ENCODE measurements at regions of chr12 and their contacts with region 1.

Region 1: GRCh38 chr12:31647086-31647491 is 12.4 kb upstream of the ETFBKMT start:
- DNase-seq: peak; percentile 49
- H3K4me3 Mint-ChIP-seq: no peak overlapping the region
- H3K27ac Mint-ChIP-seq: peak overlapping the region; percentile 28
- H3K4me1 Mint-ChIP-seq: peaks cover 10% of the 10 kb centered on the region
- H3K27me3 Mint-ChIP-seq: no peaks in the 10 kb centered on the region
- CTCF ChIP-seq: no peak

Region 2: DNA sequence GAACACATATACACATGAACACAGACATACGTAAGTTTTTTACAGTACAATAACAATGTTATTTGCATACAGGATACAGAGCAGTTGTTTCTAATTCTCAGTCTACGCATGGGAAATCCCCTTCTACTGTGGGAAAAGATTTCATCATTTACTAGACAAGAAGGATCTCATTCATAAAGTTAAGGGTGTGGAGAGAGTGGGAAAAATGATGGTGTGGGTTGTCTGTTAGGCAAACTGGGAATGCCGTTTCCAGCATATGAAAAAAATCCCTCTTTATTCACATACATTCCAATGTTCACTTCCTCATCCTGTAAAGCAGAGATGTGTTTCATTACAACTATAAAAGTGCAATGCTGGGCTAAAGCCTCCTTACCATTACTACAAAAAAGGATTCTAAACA is 442.0 kb before region 1 on chr12:
- CTCF ChIA-PET with region 1: no interaction called
- POLR2A ChIA-PET with region 1: no interaction called
- intact Hi-C with region 1: no loop called
- DNase-seq: peak; percentile 74
- H3K4me3 Mint-ChIP-seq: no peak overlapping the region
- H3K27ac Mint-ChIP-seq: no peak overlapping the region
- H3K4me1 Mint-ChIP-seq: peaks cover 37% of the 10 kb centered on the region
- H3K27me3 Mint-ChIP-seq: peaks cover 14% of the 10 kb centered on the region
- CTCF ChIP-seq: no peak

Region 3: GRCh38 chr12:31589904-31590641 is 57.0 kb before region 1 on chr12:
- CTCF ChIA-PET with region 1: no interaction called
- POLR2A ChIA-PET with region 1: no interaction called
- intact Hi-C with region 1: no loop called
- DNase-seq: peak; percentile 76
- H3K4me3 Mint-ChIP-seq: peak overlapping the region; percentile 96
- H3K27ac Mint-ChIP-seq: peak overlapping the region; percentile 92
- H3K4me1 Mint-ChIP-seq: peaks cover 36% of the 10 kb centered on the region
- H3K27me3 Mint-ChIP-seq: no peaks in the 10 kb centered on the region
- CTCF ChIP-seq: no peak

Region 4: DNA sequence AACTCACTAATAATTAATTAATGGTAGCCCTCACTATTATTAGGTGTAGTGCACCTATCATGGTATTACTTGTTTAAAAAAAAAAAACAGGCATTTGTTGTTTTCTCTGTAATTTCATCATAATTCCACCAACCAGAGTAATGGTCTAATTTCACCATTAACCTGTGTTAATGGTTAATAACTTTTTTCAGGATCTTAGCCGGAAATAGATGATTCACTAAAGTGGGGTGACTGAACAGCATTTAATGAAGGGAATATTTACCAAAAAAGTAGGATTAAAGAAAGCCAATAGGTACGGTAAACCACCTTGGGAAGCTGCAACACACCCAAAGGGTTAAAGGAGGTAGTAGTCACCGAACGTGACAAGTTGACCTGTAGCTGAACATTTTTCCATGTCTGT is 25.4 kb after region 1 on chr12:
- CTCF ChIA-PET with region 1: no interaction called
- POLR2A ChIA-PET with region 1: no interaction called
- intact Hi-C with region 1: no loop called
- DNase-seq: no peak
- H3K4me3 Mint-ChIP-seq: no peak overlapping the region
- H3K27ac Mint-ChIP-seq: no peak overlapping the region
- H3K4me1 Mint-ChIP-seq: no peaks in the 10 kb centered on the region
- H3K27me3 Mint-ChIP-seq: no peaks in the 10 kb centered on the region
- CTCF ChIP-seq: no peak

Region 5: DNA sequence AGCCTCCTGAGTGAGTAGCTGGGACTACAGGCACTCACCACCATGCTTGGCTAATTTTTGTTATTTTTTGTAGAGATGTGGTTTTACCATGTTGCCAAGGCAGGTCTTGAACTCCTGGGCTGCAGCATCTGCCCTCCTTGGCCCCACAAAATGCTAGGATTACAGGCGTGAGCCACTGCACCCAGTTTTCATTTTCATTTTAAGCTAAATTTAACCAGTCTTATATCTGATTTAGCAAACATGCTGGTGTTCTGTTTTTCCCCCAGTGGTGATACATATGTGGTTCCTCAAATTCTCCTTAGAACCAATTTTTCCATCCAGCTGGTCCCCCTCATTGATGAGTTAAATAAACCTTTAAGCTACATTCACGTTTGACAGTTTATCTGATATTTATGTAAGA is 415.8 kb after region 1 on chr12:
- CTCF ChIA-PET with region 1: interaction called, 16 read pairs
- POLR2A ChIA-PET with region 1: no interaction called
- intact Hi-C with region 1: loop called (anchors 10 kb)
- DNase-seq: no peak
- H3K4me3 Mint-ChIP-seq: no peak overlapping the region
- H3K27ac Mint-ChIP-seq: no peak overlapping the region
- H3K4me1 Mint-ChIP-seq: no peaks in the 10 kb centered on the region
- H3K27me3 Mint-ChIP-seq: no peaks in the 10 kb centered on the region
- CTCF ChIP-seq: no peak

Region 6: DNA sequence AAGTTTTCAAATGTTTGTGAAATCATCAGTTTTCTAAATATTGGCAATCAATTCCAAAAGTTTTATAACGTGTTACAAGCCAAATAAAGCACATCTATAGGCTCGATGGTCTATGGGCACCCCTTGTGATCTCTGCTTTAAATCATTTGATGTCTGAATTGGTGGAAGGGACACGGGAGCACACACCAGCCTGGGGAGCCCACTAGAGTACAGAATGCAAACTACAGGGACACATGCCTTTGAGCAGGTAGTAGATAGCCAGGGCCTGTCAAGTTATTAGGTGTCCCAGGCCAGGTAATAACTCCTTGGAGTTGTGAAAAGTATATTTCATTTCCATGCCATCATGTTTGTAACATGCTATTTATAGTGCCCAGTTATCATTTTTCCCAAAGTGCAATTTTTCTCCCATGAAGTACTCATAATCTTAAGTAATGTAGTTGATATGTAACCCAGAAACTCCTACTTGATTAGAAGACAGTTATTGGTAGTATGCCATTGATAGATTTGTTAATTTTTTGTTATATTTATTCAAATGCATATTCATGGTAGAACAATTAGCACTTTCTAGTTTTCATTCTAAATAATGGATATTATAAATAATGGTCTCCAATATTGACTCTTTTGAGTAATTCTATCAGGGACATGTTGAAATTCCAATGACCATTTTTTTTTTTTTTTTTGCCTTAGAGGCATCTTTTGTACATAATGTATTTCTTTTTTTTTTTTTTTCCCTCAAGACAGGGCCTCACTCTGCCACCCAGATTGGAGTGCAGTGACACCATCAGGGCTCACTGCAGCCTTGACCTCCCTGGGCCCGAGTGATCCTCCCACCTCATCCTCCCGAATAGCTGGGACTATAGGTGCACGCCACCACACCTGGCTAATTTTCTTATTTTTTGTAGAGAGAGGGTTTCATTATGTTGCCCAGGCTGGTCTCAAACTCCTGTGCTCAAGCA is 655.4 kb after region 1 on chr12:
- CTCF ChIA-PET with region 1: interaction called, 34 read pairs
- POLR2A ChIA-PET with region 1: no interaction called
- intact Hi-C with region 1: no loop called
- DNase-seq: peak; percentile 29
- H3K4me3 Mint-ChIP-seq: no peak overlapping the region
- H3K27ac Mint-ChIP-seq: no peak overlapping the region
- H3K4me1 Mint-ChIP-seq: no peaks in the 10 kb centered on the region
- H3K27me3 Mint-ChIP-seq: no peaks in the 10 kb centered on the region
- CTCF ChIP-seq: peak; percentile 28

Region 7: DNA sequence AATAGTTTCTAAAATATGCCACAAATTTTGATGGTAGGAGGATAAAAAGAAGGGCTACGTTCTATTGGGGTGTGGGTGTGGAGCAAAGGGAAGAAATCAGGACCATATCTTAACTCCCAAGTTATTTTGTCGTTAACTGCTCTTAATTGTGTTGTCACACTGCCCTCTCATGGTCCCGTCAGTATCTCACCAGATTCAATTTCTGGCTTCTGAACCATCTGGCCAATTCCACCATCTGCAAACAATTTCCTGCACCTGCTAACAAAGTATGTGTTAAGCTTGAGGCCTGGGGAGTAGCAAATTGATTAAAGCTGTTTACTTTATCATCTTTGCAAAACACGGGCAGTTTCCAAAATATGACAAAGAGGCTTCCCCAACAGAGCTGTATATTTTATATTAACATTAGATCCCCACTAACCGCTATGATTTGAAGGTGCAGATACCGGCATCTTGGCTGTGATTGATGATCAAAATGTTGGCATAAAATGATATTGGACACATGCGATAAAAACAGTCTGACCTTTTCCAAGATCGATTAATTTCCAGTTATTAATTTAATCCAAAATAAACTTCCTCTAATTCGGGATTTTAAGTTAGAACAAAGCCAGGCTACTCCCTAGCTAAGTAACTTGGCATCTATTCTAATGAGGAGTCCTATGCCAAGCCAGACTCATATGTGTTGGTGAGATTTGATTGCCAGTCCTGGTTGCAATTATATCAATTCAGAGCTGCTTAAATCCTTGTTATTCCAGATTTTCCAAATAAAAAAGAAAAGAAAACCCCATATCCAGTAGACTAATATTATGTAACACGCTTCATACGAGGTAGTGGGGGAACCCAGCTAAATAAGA is 1025.1 kb after region 1 on chr12:
- CTCF ChIA-PET with region 1: interaction called, 12 read pairs
- POLR2A ChIA-PET with region 1: no interaction called
- intact Hi-C with region 1: no loop called
- DNase-seq: peak; percentile 70
- H3K4me3 Mint-ChIP-seq: no peak overlapping the region
- H3K27ac Mint-ChIP-seq: no peak overlapping the region
- H3K4me1 Mint-ChIP-seq: no peaks in the 10 kb centered on the region
- H3K27me3 Mint-ChIP-seq: no peaks in the 10 kb centered on the region
- CTCF ChIP-seq: peak; percentile 62

Measured in MCF 10A (cell line).